Calu3 (cell line): ENCODE measurements at regions of chr6 and their contacts with region 1.

Region 1: GRCh38 chr6:63598049-63599036 is 26.1 kb downstream of the LOC128125822 start:
- DNase-seq: peak; percentile 76
- H3K4me3 Mint-ChIP-seq: peak overlapping the region; percentile 75
- H3K27ac Mint-ChIP-seq: peak overlapping the region; percentile 48
- H3K4me1 Mint-ChIP-seq: peaks cover 8% of the 10 kb centered on the region
- H3K27me3 Mint-ChIP-seq: no peaks in the 10 kb centered on the region
- CTCF ChIP-seq: peak; percentile 79

Region 2: GRCh38 chr6:63579937-63580703 is 18.2 kb before region 1 on chr6:
- CTCF ChIA-PET with region 1: no interaction called
- intact Hi-C with region 1: loop called (anchors 2 kb)
- DNase-seq: no peak
- H3K4me3 Mint-ChIP-seq: no peak overlapping the region
- H3K27ac Mint-ChIP-seq: peak overlapping the region; percentile 65
- H3K4me1 Mint-ChIP-seq: no peaks in the 10 kb centered on the region
- H3K27me3 Mint-ChIP-seq: no peaks in the 10 kb centered on the region
- CTCF ChIP-seq: no peak

Region 3: DNA sequence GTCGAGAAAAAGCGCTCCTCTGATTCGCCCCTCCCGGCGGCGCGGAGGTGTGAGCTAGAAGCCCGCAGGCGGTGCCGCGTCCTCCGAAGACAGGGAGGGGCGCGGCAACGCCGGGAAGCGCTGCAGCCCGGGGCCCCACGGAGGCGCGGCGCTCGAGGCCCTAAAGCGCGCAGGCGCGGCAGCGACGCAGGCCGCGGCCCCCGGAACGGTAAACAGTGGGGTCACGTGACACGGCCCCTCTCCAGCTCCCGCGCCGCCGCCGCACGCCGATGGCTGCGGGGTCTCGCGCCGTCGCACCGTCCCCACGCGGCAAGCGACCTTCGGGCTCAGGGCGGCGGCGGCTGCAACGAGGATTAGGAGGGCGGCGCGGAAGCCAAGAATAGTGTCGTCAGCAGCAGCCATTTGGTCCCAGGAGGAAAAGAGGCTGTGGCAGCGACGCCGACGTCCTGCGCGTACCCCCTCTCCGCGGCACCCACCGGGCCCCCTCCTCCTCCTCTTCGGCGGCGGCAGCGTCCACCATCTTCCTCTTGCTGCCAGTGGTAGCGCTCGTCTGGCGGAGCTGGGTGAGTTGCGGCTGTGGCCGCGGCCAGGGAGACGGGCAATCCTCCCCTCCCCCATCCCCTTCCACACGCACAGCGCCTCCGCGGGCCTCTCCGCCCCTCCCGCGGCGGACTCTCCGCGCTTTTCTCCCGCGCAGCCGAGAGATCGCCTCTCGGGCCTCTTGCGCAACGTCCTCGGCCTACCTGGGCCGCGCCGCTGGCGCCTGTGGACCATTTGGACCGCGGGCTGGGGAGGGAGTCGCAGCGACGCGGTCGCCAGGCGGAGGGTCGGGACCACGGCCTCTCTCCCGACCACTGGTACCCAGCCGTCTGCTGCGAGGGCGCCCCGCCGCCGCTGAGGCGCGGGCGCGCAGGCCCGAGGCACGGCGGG is 37.5 kb after region 1 on chr6 and contains the start of gene PHF3:
- CTCF ChIA-PET with region 1: interaction called, 6 read pairs
- intact Hi-C with region 1: loop called (anchors 2 kb)
- DNase-seq: peak; percentile 91
- H3K4me3 Mint-ChIP-seq: peak within 1 kb of the TSS; percentile 98
- H3K27ac Mint-ChIP-seq: peak within 1 kb of the TSS; percentile 97
- H3K4me1 Mint-ChIP-seq: peaks cover 31% of the 10 kb centered on the region
- H3K27me3 Mint-ChIP-seq: no peaks in the 10 kb centered on the region
- CTCF ChIP-seq: no peak
- total RNA-seq, gene PHF3: 45.6 and 46.6 TPM in 2 replicates

Region 4: GRCh38 chr6:63764318-63764916 is 166.1 kb after region 1 on chr6:
- CTCF ChIA-PET with region 1: interaction called, 36 read pairs
- intact Hi-C with region 1: loop called (anchors 1 kb)
- DNase-seq: no peak
- H3K4me3 Mint-ChIP-seq: no peak overlapping the region
- H3K27ac Mint-ChIP-seq: no peak overlapping the region
- H3K4me1 Mint-ChIP-seq: no peaks in the 10 kb centered on the region
- H3K27me3 Mint-ChIP-seq: no peaks in the 10 kb centered on the region
- CTCF ChIP-seq: peak; percentile 46

Region 5: GRCh38 chr6:63802606-63803206 is 204.4 kb after region 1 on chr6:
- CTCF ChIA-PET with region 1: interaction called, 21 read pairs
- intact Hi-C with region 1: loop called (anchors 5 kb)
- DNase-seq: peak; percentile 6
- H3K4me3 Mint-ChIP-seq: no peak overlapping the region
- H3K27ac Mint-ChIP-seq: no peak overlapping the region
- H3K4me1 Mint-ChIP-seq: peaks cover 54% of the 10 kb centered on the region
- H3K27me3 Mint-ChIP-seq: no peaks in the 10 kb centered on the region
- CTCF ChIP-seq: no peak